Panc1 (cell line): ENCODE measurements at regions of chr17 and their contacts with region 1.

Region 1: DNA sequence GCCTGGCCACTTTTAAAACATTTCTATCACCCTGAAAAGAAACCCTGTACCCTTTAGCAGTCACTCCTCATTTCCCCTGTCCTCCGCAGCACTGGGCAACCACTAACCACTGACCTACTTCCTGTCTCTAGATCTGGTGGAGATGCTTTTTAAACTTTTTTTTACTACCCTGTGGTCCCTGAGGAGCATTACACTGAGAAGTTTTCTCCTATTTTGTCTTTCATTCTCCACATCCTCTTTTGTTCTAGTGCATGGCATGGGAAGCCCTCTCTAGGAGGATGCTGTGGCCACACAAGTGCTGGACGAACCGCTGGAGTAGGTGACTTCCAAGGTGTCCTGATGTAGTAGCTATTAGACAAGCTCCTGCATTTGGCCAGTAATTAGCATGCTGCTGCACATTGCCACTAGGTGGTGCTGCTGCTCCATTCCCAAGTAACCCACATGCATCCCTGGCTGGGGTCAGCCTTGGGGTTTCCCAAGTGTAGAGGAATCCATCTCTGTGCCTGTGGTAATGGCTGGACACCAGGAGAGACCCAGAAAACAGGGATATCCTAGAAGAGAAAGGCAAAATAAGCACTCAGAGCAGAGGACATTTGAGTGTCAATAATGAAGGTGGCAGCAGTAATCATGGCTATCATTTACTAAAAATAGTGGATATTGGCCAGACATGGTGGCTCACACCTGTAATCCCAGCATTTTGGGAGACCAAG is 143.8 kb upstream of the CRHR1 start:
- DNase-seq: peak; percentile 61
- ATAC-seq: peak; percentile 93
- H3K4me3 ChIP-seq: no peak overlapping the region
- H3K27ac ChIP-seq: no peak overlapping the region
- H3K4me1 ChIP-seq: no peaks in the 10 kb centered on the region
- H3K27me3 ChIP-seq: no peaks in the 10 kb centered on the region
- CTCF ChIP-seq: peak; percentile 94

Region 2: GRCh38 chr17:45729294-45729907 is 89.1 kb after region 1 on chr17:
- CTCF ChIA-PET with region 1: no interaction called
- POLR2A ChIA-PET with region 1: no interaction called
- in situ Hi-C with region 1: no loop called
- intact Hi-C with region 1: no loop called
- DNase-seq: no peak
- ATAC-seq: no peak
- H3K4me3 ChIP-seq: no peak overlapping the region
- H3K27ac ChIP-seq: no peak overlapping the region
- H3K4me1 ChIP-seq: no peaks in the 10 kb centered on the region
- H3K27me3 ChIP-seq: no peaks in the 10 kb centered on the region; the same call in 1 of the 2 replicates
- CTCF ChIP-seq: no peak

Region 3: DNA sequence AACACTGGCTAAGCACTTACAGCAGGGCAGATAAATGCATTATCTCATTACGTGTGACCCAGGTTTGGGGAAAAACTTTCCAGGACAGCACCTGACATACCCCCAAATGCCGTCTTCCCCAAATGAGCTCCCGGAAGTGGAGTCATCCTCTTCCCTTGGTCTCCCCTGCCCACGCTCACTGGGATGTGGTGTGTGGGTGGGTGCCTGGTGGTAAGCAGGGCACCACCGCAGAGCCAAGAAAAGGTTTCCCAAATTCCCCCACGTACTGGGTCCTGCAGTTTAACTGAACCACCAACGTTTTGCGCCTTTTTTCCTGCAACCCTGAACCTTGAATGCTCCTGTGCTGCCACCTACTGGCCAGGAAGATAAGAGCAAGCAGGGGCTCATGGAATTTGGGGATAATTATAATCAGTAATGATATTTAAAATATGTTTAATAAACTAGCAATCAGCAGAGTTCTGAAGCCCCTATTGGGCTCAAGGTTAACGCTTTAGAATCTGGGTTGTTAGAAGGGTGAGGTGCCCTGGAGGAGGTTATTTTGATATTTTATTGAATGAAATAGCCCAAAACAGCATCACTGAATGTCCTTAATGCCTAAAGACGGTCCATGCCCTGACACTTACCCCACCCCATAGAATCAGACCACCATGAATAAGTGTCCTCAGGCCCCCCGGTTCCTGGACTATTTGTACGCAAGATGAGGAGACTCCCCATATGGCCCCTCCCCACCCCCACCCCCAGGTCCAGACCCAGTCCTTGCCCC is 212.4 kb after region 1 on chr17:
- CTCF ChIA-PET with region 1: interaction called, 10 read pairs
- POLR2A ChIA-PET with region 1: no interaction called
- in situ Hi-C with region 1: no loop called
- intact Hi-C with region 1: no loop called
- DNase-seq: peak; percentile 13
- ATAC-seq: peak; percentile 60; the same call in 1 of the 2 replicates
- H3K4me3 ChIP-seq: no peak overlapping the region
- H3K27ac ChIP-seq: no peak overlapping the region
- H3K4me1 ChIP-seq: no peaks in the 10 kb centered on the region
- H3K27me3 ChIP-seq: no peaks in the 10 kb centered on the region
- CTCF ChIP-seq: peak; percentile 84